ENCODE measurements at regions of chr2 and their contacts with region 1.

Region 1: GRCh38 chr2:207625018-207625907 is at the start of gene METTL21A:
- DNase-seq: peak; percentile 89 to 95 (median 95)
- ATAC-seq: peak; percentile 96
- H3K4me3 ChIP-seq: peak within 1 kb of the TSS; percentile 66
- H3K27ac ChIP-seq: peak within 1 kb of the TSS; percentile 59
- H3K4me1 ChIP-seq: peaks cover 3% of the 10 kb centered on the region
- H3K27me3 ChIP-seq: no peaks in the 10 kb centered on the region
- total RNA-seq, gene METTL21A: 11.8 to 19.0 (median 14.3) TPM

Region 2: GRCh38 chr2:207529330-207530159 is 95.7 kb before region 1 on chr2 and contains the start of gene CREB1:
- intact Hi-C with region 1: loop called in 2 of 4 experiments (anchors 2 to 5 kb)
- DNase-seq: peak; percentile 98 to 100 (median 100)
- ATAC-seq: peak; percentile 98
- H3K4me3 ChIP-seq: peak within 1 kb of the TSS; percentile 98
- H3K27ac ChIP-seq: peak within 1 kb of the TSS; percentile 98
- H3K4me1 ChIP-seq: no peaks in the 10 kb centered on the region
- H3K27me3 ChIP-seq: no peaks in the 10 kb centered on the region
- total RNA-seq, gene CREB1: 43.4 to 59.3 (median 49.3) TPM

Region 3: DNA sequence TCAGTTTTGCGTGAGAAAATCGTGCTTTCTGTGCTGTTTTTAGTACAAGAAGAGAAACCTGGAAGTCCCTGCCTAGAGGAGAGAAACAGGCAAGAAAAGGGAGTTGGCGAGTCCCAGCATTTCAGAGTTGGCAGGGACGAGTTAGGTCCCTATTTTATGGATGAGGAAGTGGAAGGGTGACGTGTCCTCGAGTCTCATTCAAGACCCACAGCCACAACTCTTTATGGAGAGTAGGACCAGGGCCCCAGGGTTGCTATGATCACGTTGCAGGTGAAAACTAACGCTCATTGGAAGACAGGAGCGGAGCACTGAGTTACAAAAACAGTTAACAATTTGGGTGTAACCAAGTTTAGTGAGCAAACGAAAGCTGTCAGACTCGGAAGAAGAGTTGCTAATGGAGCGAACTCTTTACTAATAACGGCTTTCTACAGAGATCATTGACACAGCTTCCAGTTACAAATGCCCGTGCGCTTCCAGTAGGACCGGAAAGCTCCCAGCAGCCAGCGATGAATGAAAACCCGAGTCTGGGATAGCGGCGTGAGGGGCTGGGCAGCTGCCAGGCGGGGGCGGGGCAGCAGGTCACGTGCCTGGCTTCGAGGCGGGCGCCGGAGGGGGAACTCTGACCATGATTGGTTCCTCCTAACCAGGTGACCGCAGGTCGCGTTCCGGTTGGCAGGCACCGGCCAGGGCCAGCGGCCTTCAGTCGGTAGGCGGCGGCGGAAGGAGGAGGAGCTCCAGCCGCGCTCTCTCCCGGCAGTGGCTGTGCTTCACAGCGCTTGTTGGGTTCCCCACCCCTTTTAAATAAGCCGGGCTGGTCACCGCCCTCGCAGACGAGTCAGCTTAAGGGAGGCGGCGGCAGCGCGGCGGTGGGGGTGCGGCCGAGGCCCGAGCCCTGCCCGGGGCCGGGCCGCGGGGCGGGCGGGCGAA is 85.8 kb after region 1 on chr2 and contains the start of gene CCNYL1:
- intact Hi-C with region 1: loop called in 2 of 4 experiments (anchors 5 to 10 kb)
- DNase-seq: peak; percentile 99 to 100 (median 100)
- ATAC-seq: peak; percentile 100
- H3K4me3 ChIP-seq: peak within 1 kb of the TSS; percentile 72
- H3K27ac ChIP-seq: peak within 1 kb of the TSS; percentile 65
- H3K4me1 ChIP-seq: no peaks in the 10 kb centered on the region
- H3K27me3 ChIP-seq: no peaks in the 10 kb centered on the region
- total RNA-seq, gene CCNYL1: 8.2 to 12.6 (median 10.3) TPM

Region 4: GRCh38 chr2:208072250-208072892 is 447.1 kb after region 1 on chr2:
- intact Hi-C with region 1: loop called in 1 of 4 experiments (anchors 10 kb)
- DNase-seq: peak; percentile 34 to 67 (median 55)
- ATAC-seq: peak; percentile 81 to 82
- H3K4me3 ChIP-seq: no peak overlapping the region
- H3K27ac ChIP-seq: no peak overlapping the region
- H3K4me1 ChIP-seq: no peaks in the 10 kb centered on the region
- H3K27me3 ChIP-seq: no peaks in the 10 kb centered on the region